ENCODE measurements at regions of chr2 and their contacts with region 1.

Region 1: DNA sequence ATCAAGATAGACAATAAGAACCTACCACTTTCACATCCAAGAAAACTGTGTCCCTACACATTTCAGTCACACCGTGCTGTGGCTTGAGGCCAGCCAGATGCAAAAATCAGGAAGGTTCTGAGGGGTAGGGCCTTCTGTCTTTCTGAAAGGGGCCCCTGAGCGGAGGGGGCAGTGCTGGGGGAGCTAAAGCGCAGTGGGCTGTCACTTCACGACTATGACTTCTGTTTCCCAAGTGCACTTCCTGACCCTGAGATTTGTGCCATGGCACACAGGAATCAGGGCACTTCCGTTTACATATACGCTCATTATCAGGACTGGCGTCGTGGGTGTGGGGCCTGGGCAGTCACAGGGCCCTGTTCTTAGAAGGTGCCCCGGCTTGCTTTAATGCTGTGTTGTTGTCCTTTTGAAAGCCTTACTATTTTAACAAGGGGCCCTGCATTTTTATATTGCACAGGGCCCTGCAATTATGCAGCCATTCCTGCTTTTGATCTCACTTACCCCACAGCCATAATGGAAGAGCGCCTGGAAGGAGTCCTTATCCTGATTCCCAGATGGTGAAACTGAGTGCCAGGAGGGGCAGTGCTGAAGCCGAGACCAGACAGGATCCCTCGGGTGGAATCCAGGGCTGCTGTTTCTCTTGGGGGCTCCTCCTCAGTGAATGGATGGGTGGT is 620 bp downstream of the NGEF start:
- DNase-seq: no peak
- ATAC-seq: peak in 1 of 4 donors; percentile 32
- H3K4me3 ChIP-seq: no peak overlapping the region
- H3K27ac ChIP-seq: no peak overlapping the region
- H3K4me1 ChIP-seq: peaks cover 0 to 7% (median 0%) of the 10 kb centered on the region in 12 donors
- H3K27me3 ChIP-seq: no peaks in the 10 kb centered on the region
- CTCF ChIP-seq: no peak
- POLR2A ChIP-seq: no peak

Region 2: GRCh38 chr2:232869138-232870017 is 143.1 kb before region 1 on chr2:
- intact Hi-C with region 1: loop called in 1 of 10 experiments (anchors 10 kb)
- DNase-seq: no peak
- ATAC-seq: no peak
- H3K4me3 ChIP-seq: no peak overlapping the region
- H3K27ac ChIP-seq: no peak overlapping the region
- H3K4me1 ChIP-seq: no peaks in the 10 kb centered on the region
- H3K27me3 ChIP-seq: no peaks in the 10 kb centered on the region
- CTCF ChIP-seq: no peak
- POLR2A ChIP-seq: no peak